Heart left ventricle (tissue), 16 donors: ENCODE measurements at regions of chr5 and their contacts with region 1.

Region 1: GRCh38 chr5:148730943-148731861 is 76.9 kb upstream of the HTR4 start:
- DNase-seq: peak; percentile 65 to 81 (median 76)
- ATAC-seq: peak; percentile 67 to 90 (median 86)
- H3K4me3 ChIP-seq: peak overlapping the region in 5 of 12 donors; percentile 7 to 28 (median 8)
- H3K27ac ChIP-seq: no peak overlapping the region
- H3K4me1 ChIP-seq: peaks cover 0 to 11% (median 2%) of the 10 kb centered on the region in 12 donors
- H3K27me3 ChIP-seq: no peaks in the 10 kb centered on the region
- CTCF ChIP-seq: peak; percentile 85 to 99 (median 92)
- POLR2A ChIP-seq: no peak

Region 2: DNA sequence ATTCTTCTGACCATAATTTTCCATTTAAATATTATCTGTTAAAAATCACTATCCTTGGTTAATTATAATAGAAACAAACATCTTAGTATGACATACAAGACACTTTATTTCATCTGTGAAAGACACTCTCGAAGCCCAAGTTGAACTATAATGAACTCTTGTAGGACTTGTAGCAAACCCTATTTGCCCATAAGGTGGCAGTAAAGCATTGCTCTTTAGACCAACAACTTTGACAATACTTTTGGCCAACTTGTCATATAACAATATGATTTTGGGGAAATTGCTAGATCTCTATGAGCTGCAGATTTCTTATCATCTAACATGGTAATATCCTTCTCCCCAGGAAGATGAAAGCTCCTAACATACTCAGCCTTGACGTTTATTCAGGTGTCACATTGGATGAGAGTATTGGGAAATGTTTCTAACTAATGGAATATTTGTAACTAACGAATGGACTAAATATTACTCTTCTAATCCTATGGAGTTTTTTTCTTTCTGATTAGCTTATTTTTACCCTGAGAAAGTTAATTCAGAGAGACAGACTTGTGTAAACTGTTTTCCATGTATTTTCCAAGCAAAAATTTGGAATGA is 551.9 kb before region 1 on chr5:
- intact Hi-C with region 1: loop called (anchors 1 to 5 kb)
- DNase-seq: peak in 1 of 5 donors; percentile 6
- ATAC-seq: peak in 3 of 4 donors; percentile 49 to 75 (median 70)
- H3K4me3 ChIP-seq: no peak overlapping the region
- H3K27ac ChIP-seq: no peak overlapping the region
- H3K4me1 ChIP-seq: peaks cover 0 to 5% (median 0%) of the 10 kb centered on the region in 12 donors
- H3K27me3 ChIP-seq: no peaks in the 10 kb centered on the region
- CTCF ChIP-seq: peak; percentile 51 to 88 (median 74)
- POLR2A ChIP-seq: no peak

Region 3: DNA sequence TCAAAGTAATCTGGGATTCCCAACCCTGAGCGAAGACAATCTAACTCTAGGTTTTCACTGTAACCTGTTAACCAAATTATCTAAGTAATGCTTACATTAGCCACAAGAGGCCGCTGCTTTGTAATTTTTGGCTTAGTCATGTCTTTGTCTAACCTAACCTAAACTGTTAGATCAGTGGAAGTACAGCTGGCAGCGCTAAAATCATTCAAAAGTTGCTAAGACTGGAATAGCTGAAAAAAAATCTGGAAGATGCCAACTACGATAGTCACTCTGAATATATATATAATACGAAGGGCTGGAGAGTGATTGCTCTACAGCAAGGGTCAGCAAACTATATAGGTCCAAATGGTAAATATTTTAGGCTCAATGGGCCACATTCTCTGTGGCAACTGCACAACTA is 287.2 kb before region 1 on chr5:
- intact Hi-C with region 1: loop called (anchors 1 to 5 kb)
- DNase-seq: peak in 3 of 5 donors; percentile 28 to 65 (median 45)
- ATAC-seq: peak; percentile 68 to 83 (median 82)
- H3K4me3 ChIP-seq: no peak overlapping the region
- H3K27ac ChIP-seq: peak overlapping the region in 2 of 12 donors; percentile 6 to 24
- H3K4me1 ChIP-seq: peaks cover 0 to 28% (median 5%) of the 10 kb centered on the region in 12 donors
- H3K27me3 ChIP-seq: no peaks in the 10 kb centered on the region
- CTCF ChIP-seq: peak; percentile 63 to 86 (median 77)
- POLR2A ChIP-seq: no peak

Region 4: GRCh38 chr5:148697180-148697808 is 33.9 kb before region 1 on chr5:
- intact Hi-C with region 1: no loop called
- DNase-seq: no peak
- ATAC-seq: peak in 3 of 4 donors; percentile 75 to 91 (median 83)
- H3K4me3 ChIP-seq: peak overlapping the region in 2 of 12 donors; percentile 10 to 20
- H3K27ac ChIP-seq: peak overlapping the region in 3 of 12 donors; percentile 26 to 34 (median 28)
- H3K4me1 ChIP-seq: no peaks in the 10 kb centered on the region
- H3K27me3 ChIP-seq: no peaks in the 10 kb centered on the region
- CTCF ChIP-seq: no peak
- POLR2A ChIP-seq: no peak

Region 5: GRCh38 chr5:148998174-148998797 is 267.1 kb after region 1 on chr5:
- intact Hi-C with region 1: loop called in 6 of 10 experiments (anchors 2 to 5 kb)
- DNase-seq: peak in 1 of 5 donors; percentile 28
- ATAC-seq: peak in 3 of 4 donors; percentile 47 to 69 (median 69)
- H3K4me3 ChIP-seq: no peak overlapping the region
- H3K27ac ChIP-seq: no peak overlapping the region
- H3K4me1 ChIP-seq: peaks cover 0 to 28% (median 6%) of the 10 kb centered on the region in 12 donors
- H3K27me3 ChIP-seq: no peaks in the 10 kb centered on the region
- CTCF ChIP-seq: peak; percentile 57 to 77 (median 68)
- POLR2A ChIP-seq: no peak

Region 6: GRCh38 chr5:149114403-149115312 is 383.5 kb after region 1 on chr5:
- intact Hi-C with region 1: loop called in 9 of 10 experiments (anchors 1 to 5 kb)
- DNase-seq: peak; percentile 49 to 73 (median 55)
- ATAC-seq: peak; percentile 85 to 97 (median 95)
- H3K4me3 ChIP-seq: no peak overlapping the region
- H3K27ac ChIP-seq: peak overlapping the region in 7 of 12 donors; percentile 2 to 62 (median 38)
- H3K4me1 ChIP-seq: peaks cover 0 to 10% (median 4%) of the 10 kb centered on the region in 12 donors
- H3K27me3 ChIP-seq: no peaks in the 10 kb centered on the region
- CTCF ChIP-seq: peak; percentile 49 to 85 (median 75)
- POLR2A ChIP-seq: no peak

Region 7: GRCh38 chr5:149268928-149269557 is 537.8 kb after region 1 on chr5:
- intact Hi-C with region 1: loop called in 1 of 10 experiments (anchors 10 kb)
- DNase-seq: no peak
- ATAC-seq: no peak
- H3K4me3 ChIP-seq: no peak overlapping the region
- H3K27ac ChIP-seq: peak overlapping the region in 5 of 12 donors; percentile 7 to 50 (median 39)
- H3K4me1 ChIP-seq: peaks cover 0 to 29% (median 17%) of the 10 kb centered on the region in 12 donors
- H3K27me3 ChIP-seq: peaks cover 0 to 24% (median 0%) of the 10 kb centered on the region in 9 donors
- CTCF ChIP-seq: peak; percentile 56 to 92 (median 75)
- POLR2A ChIP-seq: no peak